ENCODE measurements at regions of chr2 and their contacts with region 1.

Region 1: GRCh38 chr2:50661682-50662081 is 370.2 kb downstream of the NRXN1 start:
- DNase-seq: no peak
- H3K4me3 ChIP-seq: no peak overlapping the region
- H3K27ac ChIP-seq: no peak overlapping the region
- H3K4me1 ChIP-seq: no peaks in the 10 kb centered on the region
- H3K27me3 ChIP-seq: no peaks in the 10 kb centered on the region
- CTCF ChIP-seq: no peak

Region 2: GRCh38 chr2:50026236-50026635 is 635.4 kb before region 1 on chr2:
- intact Hi-C with region 1: no loop called
- DNase-seq: no peak
- H3K4me3 ChIP-seq: no peak overlapping the region
- H3K27ac ChIP-seq: no peak overlapping the region
- H3K4me1 ChIP-seq: no peaks in the 10 kb centered on the region
- H3K27me3 ChIP-seq: no peaks in the 10 kb centered on the region
- CTCF ChIP-seq: no peak

Region 3: DNA sequence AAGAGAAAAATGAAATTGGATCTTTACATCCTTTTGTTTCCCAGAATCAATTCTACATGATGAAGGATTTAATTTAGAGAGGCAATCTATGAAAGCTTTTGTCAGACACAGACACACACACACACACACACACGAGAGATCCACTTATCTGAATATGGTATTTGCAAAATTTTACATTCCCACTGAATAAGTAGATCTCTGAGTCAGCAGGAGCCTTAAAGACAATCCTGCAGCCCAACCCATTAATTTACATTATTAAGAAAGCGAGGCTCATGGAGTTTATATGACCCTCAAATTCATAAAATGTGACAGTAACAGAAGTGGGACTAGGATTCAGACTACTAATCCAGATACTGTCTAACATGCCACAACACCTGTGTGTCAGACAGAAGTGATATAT is 34.2 kb before region 1 on chr2:
- intact Hi-C with region 1: loop called (anchors 5 kb)
- DNase-seq: no peak
- H3K4me3 ChIP-seq: no peak overlapping the region
- H3K27ac ChIP-seq: no peak overlapping the region
- H3K4me1 ChIP-seq: no peaks in the 10 kb centered on the region
- H3K27me3 ChIP-seq: no peaks in the 10 kb centered on the region
- CTCF ChIP-seq: no peak

Region 4: DNA sequence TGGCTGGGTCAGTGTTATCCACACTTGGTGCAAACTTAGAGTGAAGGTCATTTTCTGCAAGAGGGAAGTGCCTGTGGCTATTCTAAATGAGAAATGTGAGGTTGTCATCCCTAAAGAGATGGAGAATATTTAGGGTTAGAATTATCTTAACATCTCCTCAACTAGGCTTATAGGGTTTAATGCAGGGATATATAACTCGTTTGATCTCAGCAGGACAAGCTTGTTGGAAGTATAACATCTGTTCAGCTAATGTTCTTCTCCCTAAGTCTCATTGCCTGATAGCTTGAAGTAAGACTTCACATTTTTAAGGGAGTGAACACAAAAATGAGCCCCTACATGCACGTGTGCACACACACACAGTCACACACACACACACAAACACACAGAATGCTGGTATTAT is 446.2 kb after region 1 on chr2:
- intact Hi-C with region 1: no loop called
- DNase-seq: no peak
- H3K4me3 ChIP-seq: no peak overlapping the region
- H3K27ac ChIP-seq: no peak overlapping the region
- H3K4me1 ChIP-seq: no peaks in the 10 kb centered on the region
- H3K27me3 ChIP-seq: no peaks in the 10 kb centered on the region
- CTCF ChIP-seq: no peak

Measured in ascending aorta (tissue), 2 donors.